ENCODE measurements at regions of chr6 and their contacts with region 1.

Region 1: GRCh38 chr6:32081168-32081990 is 27.8 kb downstream of the TNXB start:
- DNase-seq: peak; percentile 51
- H3K4me3 ChIP-seq: no peak overlapping the region
- H3K27me3 ChIP-seq: peaks cover 8% of the 10 kb centered on the region
- CTCF ChIP-seq: no peak

Region 2: DNA sequence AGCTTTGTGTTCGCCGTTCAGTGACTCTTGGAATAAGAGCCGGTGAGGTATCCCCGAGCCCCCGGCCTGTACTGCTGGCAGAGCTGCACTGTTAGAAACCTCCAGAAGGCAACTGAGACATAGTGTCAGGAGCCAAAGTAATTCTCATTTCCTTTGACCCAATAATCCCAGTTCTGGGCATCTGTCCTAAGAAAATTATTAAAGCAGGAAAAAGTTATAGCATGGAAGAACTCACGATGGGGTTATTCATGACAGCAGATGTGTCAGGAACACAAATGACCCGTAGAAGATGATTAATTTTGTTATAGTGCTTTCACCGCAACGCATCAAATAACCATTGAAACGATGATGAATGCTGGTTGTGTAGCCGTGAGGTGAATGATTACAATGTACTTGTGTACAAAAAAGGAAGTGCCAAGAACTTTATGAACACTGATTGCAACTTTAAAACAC is 22.8 kb before region 1 on chr6:
- CTCF ChIA-PET with region 1: no interaction called
- POLR2A ChIA-PET with region 1: no interaction called
- DNase-seq: no peak
- H3K4me3 ChIP-seq: no peak overlapping the region
- H3K27me3 ChIP-seq: no peaks in the 10 kb centered on the region
- CTCF ChIP-seq: no peak

Region 3: DNA sequence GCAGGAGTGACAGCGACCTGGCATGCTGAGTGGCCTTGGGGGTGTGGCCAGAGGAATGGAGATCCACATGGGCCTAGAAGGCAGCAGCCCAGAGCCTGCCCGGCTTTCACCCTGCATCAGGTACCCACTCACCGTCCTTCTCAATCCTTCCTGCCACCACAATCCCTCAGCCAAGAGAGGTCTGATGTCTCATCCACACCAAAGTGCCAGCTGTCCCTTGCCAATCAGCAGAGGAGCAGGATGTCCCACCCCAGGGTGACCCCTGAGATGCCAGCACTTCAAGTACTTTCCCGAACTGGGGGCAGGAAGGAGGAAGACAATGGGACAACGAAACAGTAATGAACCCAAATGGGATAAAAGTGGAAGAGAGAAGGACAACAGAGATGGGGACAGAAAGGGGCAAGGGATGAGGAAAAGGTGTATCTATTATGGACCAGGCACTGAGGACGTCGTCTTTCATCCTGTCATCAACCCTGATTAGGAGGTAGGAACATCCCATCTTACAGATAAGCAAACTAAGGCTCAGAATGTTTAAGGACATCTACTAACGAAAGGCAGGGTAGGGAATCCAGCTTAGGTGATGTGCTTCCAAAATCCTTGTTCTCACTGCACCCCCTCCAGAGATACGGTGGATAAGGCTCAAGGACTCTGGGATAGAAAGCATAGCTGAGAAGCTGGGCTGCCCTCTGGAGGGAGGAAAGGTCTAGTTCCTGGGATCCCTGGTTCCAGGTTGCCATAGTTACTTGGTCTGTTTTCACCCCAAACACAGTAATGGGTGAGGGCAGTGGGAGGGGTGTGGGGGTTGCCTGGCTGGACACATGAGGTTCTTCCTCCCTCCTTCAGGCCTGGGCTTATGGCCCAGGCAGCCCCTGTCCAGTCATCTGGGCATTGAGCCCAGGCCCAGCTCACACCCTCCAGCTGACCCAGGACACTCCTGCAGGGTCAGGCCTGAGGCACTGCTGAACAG is 32.3 kb after region 1 on chr6:
- CTCF ChIA-PET with region 1: interaction called, 6 read pairs
- POLR2A ChIA-PET with region 1: interaction called, 11 read pairs
- DNase-seq: peak; percentile 97
- H3K4me3 ChIP-seq: no peak overlapping the region
- H3K27me3 ChIP-seq: peaks cover 4% of the 10 kb centered on the region
- CTCF ChIP-seq: peak; percentile 71